Pancreas (tissue), 10 donors: ENCODE measurements at regions of chr3 and their contacts with region 1.

Region 1: GRCh38 chr3:123658118-123658851 is 73.4 kb upstream of the HACD2 start:
- DNase-seq: no peak
- ATAC-seq: peak in 1 of 4 donors; percentile 42
- H3K4me3 ChIP-seq: no peak overlapping the region
- H3K27ac ChIP-seq: no peak overlapping the region
- H3K4me1 ChIP-seq: peaks cover 3 to 10% (median 8%) of the 10 kb centered on the region in 3 donors
- H3K27me3 ChIP-seq: no peaks in the 10 kb centered on the region
- CTCF ChIP-seq: no peak

Region 2: GRCh38 chr3:122936335-122936734 is 722.0 kb before region 1 on chr3:
- intact Hi-C with region 1: no loop called
- DNase-seq: peak in 1 of 6 donors; percentile 41
- ATAC-seq: peak in 2 of 4 donors; percentile 57 to 71
- H3K4me3 ChIP-seq: no peak overlapping the region
- H3K27ac ChIP-seq: no peak overlapping the region
- H3K4me1 ChIP-seq: no peaks in the 10 kb centered on the region
- H3K27me3 ChIP-seq: no peaks in the 10 kb centered on the region
- CTCF ChIP-seq: no peak

Region 3: GRCh38 chr3:123719862-123720453 is 61.7 kb after region 1 on chr3:
- intact Hi-C with region 1: loop called in 1 of 3 experiments (anchors 5 kb)
- DNase-seq: no peak
- ATAC-seq: peak in 1 of 4 donors; percentile 7
- H3K4me3 ChIP-seq: no peak overlapping the region
- H3K27ac ChIP-seq: no peak overlapping the region
- H3K4me1 ChIP-seq: no peaks in the 10 kb centered on the region
- H3K27me3 ChIP-seq: no peaks in the 10 kb centered on the region
- CTCF ChIP-seq: no peak